Naive thymus-derived CD4-positive, alpha-beta T cell (primary cell): ENCODE measurements at regions of chr3 and their contacts with region 1.

Region 1: DNA sequence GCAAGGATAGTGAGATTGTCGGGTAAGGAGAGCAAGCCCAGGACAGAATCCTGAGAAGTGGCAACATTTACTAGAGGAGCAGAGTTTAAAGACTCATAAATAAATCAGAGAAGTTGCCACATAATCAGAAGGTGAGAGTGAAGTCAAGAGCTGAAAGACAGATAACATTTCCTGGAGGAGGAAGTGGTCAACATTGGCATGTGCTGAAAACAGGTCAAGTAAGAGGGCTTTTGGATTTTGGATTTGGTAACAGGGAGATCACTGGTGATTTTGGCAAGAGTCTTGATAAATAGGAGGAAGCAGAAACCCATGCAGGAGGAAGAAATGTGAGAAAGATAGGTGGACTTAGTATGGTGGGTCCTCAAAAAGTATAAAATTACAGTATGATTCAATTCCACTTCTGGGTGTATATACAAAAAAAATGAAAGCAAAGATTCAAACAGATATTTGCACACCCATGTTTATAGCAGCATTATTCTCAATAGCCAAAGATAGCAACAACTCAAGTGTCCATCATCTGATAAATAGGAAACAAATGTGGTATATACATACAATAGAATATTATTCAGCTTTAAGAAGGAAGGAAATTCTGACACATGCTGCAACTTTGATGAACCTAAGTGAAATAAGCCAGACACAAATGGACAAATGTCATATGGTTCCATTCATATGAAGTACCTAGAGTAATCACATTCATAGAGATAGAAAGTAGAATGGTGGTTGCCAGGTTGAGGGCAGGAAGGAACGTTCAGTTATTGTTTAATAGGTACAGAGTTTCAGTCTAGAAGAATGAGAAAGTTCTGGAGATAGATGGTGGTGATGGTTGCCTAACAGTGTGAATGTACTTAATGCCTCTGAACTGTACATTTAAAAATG is 27.3 kb upstream of the MBNL1 start:
- DNase-seq: no peak
- ATAC-seq: no peak
- H3K4me3 ChIP-seq: peak overlapping the region; percentile 24
- H3K4me3 Mint-ChIP-seq: peak overlapping the region; percentile 64 to 97 (median 92)
- H3K27ac ChIP-seq: peak overlapping the region; percentile 72
- H3K27ac Mint-ChIP-seq: peak overlapping the region; percentile 78 to 97 (median 94)
- H3K4me1 ChIP-seq: peaks cover 35 to 57% of the 10 kb centered on the region in 2 donors
- H3K4me1 Mint-ChIP-seq: peaks cover 36 to 79% (median 68%) of the 10 kb centered on the region in 7 donors
- H3K27me3 ChIP-seq: no peaks in the 10 kb centered on the region
- H3K27me3 Mint-ChIP-seq: no peaks in the 10 kb centered on the region

Region 2: GRCh38 chr3:152183473-152183872 is 57.9 kb before region 1 on chr3:
- CTCF ChIA-PET with region 1: interaction called, 7 read pairs
- POLR2A ChIA-PET with region 1: interaction called, 10 read pairs
- intact Hi-C with region 1: no loop called
- DNase-seq: peak in 7 of 9 donors; percentile 41 to 64 (median 55)
- ATAC-seq: peak; percentile 83
- H3K4me3 ChIP-seq: no peak overlapping the region
- H3K4me3 Mint-ChIP-seq: peak overlapping the region; percentile 40 to 74 (median 52)
- H3K27ac ChIP-seq: no peak overlapping the region
- H3K27ac Mint-ChIP-seq: peak overlapping the region in 8 of 9 donors; percentile 48 to 89 (median 70)
- H3K4me1 ChIP-seq: peaks cover 13 to 34% of the 10 kb centered on the region in 2 donors
- H3K4me1 Mint-ChIP-seq: peaks cover 39 to 82% (median 76%) of the 10 kb centered on the region in 7 donors
- H3K27me3 ChIP-seq: no peaks in the 10 kb centered on the region
- H3K27me3 Mint-ChIP-seq: no peaks in the 10 kb centered on the region

Region 3: DNA sequence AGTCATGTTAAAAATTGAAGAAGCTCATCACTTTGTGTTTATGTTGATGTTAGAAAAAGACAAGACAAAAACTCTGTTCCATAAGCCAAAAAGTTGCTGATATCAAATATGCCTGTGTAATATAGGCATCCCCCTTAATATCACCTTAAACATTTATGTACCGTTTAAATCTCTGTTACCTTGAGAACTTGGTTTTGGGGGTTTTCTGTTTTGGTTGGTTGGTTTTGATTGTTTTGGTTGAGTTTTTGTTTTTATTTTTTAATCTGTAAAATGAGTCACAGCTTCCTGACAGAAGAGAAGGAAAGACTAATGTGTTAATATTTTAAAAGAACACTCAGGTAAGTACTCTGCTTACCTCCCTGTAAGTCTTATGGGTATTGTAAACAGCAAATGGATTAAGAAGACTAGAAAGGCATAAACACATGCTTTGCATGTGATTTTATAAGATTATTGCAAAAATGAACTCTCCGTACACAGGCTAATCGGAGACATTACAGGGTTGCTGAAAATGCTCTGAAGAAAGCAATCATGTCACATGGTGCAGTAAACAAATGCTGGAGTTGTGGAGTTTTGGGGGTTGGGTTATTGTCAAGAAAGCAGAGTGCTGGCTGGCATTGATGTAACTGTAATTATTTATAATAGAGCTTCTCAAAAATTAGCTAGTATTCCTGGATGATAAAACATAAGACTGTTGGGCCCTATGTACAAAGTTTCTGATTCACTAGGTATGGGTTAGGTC is 42.1 kb before region 1 on chr3:
- CTCF ChIA-PET with region 1: interaction called, 4 read pairs
- POLR2A ChIA-PET with region 1: interaction called, 65 read pairs
- intact Hi-C with region 1: loop called (anchors 1 kb)
- DNase-seq: peak in 2 of 9 donors; percentile 37
- ATAC-seq: peak; percentile 58
- H3K4me3 ChIP-seq: peak overlapping the region; percentile 50
- H3K4me3 Mint-ChIP-seq: peak overlapping the region; percentile 63 to 89 (median 84)
- H3K27ac ChIP-seq: peak overlapping the region; percentile 84
- H3K27ac Mint-ChIP-seq: peak overlapping the region; percentile 90 to 100 (median 94)
- H3K4me1 ChIP-seq: peaks cover 30 to 58% of the 10 kb centered on the region in 2 donors
- H3K4me1 Mint-ChIP-seq: peaks cover 43 to 84% (median 71%) of the 10 kb centered on the region in 7 donors
- H3K27me3 ChIP-seq: no peaks in the 10 kb centered on the region
- H3K27me3 Mint-ChIP-seq: no peaks in the 10 kb centered on the region

Region 4: GRCh38 chr3:152213203-152213602 is 28.2 kb before region 1 on chr3:
- CTCF ChIA-PET with region 1: interaction called, 4 read pairs
- POLR2A ChIA-PET with region 1: interaction called, 26 read pairs
- intact Hi-C with region 1: no loop called
- DNase-seq: no peak
- ATAC-seq: no peak
- H3K4me3 ChIP-seq: peak overlapping the region; percentile 19
- H3K4me3 Mint-ChIP-seq: peak overlapping the region in 4 of 10 donors; percentile 0 to 45 (median 28)
- H3K27ac ChIP-seq: peak overlapping the region; percentile 25
- H3K27ac Mint-ChIP-seq: peak overlapping the region in 8 of 9 donors; percentile 10 to 100 (median 64)
- H3K4me1 ChIP-seq: peaks cover 10 to 38% of the 10 kb centered on the region in 2 donors
- H3K4me1 Mint-ChIP-seq: peaks cover 43 to 83% (median 70%) of the 10 kb centered on the region in 7 donors
- H3K27me3 ChIP-seq: no peaks in the 10 kb centered on the region
- H3K27me3 Mint-ChIP-seq: no peaks in the 10 kb centered on the region

Region 5: GRCh38 chr3:152229692-152230091 is 11.7 kb before region 1 on chr3:
- CTCF ChIA-PET with region 1: interaction called, 7 read pairs
- POLR2A ChIA-PET with region 1: interaction called, 57 read pairs
- intact Hi-C with region 1: loop called in 1 of 2 experiments (anchors 2 kb)
- DNase-seq: no peak
- ATAC-seq: no peak
- H3K4me3 ChIP-seq: no peak overlapping the region
- H3K4me3 Mint-ChIP-seq: peak overlapping the region in 4 of 10 donors; percentile 4 to 73 (median 34)
- H3K27ac ChIP-seq: no peak overlapping the region
- H3K27ac Mint-ChIP-seq: peak overlapping the region in 5 of 9 donors; percentile 1 to 75 (median 36)
- H3K4me1 ChIP-seq: peaks cover 4 to 32% of the 10 kb centered on the region in 2 donors
- H3K4me1 Mint-ChIP-seq: peaks cover 30 to 83% (median 71%) of the 10 kb centered on the region in 7 donors
- H3K27me3 ChIP-seq: no peaks in the 10 kb centered on the region
- H3K27me3 Mint-ChIP-seq: no peaks in the 10 kb centered on the region

Region 6: GRCh38 chr3:152281133-152281713 is 39.8 kb after region 1 on chr3:
- CTCF ChIA-PET with region 1: no interaction called
- POLR2A ChIA-PET with region 1: interaction called, 14 read pairs
- intact Hi-C with region 1: no loop called
- DNase-seq: no peak
- ATAC-seq: peak; percentile 12
- H3K4me3 ChIP-seq: peak overlapping the region; percentile 18
- H3K4me3 Mint-ChIP-seq: peak overlapping the region; percentile 64 to 79 (median 72)
- H3K27ac ChIP-seq: peak overlapping the region; percentile 49
- H3K27ac Mint-ChIP-seq: peak overlapping the region; percentile 6 to 94 (median 73)
- H3K4me1 ChIP-seq: peaks cover 47 to 86% of the 10 kb centered on the region in 2 donors
- H3K4me1 Mint-ChIP-seq: peaks cover 55 to 95% (median 85%) of the 10 kb centered on the region in 7 donors
- H3K27me3 ChIP-seq: no peaks in the 10 kb centered on the region
- H3K27me3 Mint-ChIP-seq: no peaks in the 10 kb centered on the region

Region 7: DNA sequence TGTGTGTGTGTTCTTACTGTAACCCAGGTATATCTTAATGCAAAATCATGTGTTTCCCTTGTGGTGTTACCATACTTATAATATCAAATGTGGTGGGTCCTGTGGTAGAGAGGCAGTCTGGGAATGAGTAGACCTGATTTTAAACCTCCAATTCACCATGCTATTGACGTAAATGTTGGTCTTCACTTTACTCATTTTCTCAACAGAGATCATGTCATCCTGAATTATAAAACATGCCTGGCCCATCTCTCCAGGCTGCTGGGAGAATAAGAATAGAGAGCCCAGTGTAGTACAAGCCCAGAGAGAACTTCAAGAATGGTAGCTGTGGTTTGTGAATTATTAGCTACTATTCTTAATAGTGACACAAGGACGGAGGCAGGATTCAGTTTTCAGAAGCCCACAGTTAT is 115.5 kb after region 1 on chr3:
- CTCF ChIA-PET with region 1: no interaction called
- POLR2A ChIA-PET with region 1: no interaction called
- intact Hi-C with region 1: no loop called
- DNase-seq: no peak
- ATAC-seq: peak; percentile 38
- H3K4me3 ChIP-seq: no peak overlapping the region
- H3K4me3 Mint-ChIP-seq: peak overlapping the region in 7 of 10 donors; percentile 7 to 59 (median 38)
- H3K27ac ChIP-seq: peak overlapping the region; percentile 30
- H3K27ac Mint-ChIP-seq: peak overlapping the region in 7 of 9 donors; percentile 21 to 85 (median 71)
- H3K4me1 ChIP-seq: peaks cover 25 to 50% of the 10 kb centered on the region in 2 donors
- H3K4me1 Mint-ChIP-seq: peaks cover 42 to 93% (median 81%) of the 10 kb centered on the region in 7 donors
- H3K27me3 ChIP-seq: no peaks in the 10 kb centered on the region
- H3K27me3 Mint-ChIP-seq: no peaks in the 10 kb centered on the region

Region 8: GRCh38 chr3:152695840-152696239 is 454.5 kb after region 1 on chr3:
- CTCF ChIA-PET with region 1: no interaction called
- POLR2A ChIA-PET with region 1: no interaction called
- intact Hi-C with region 1: loop called in 1 of 2 experiments (anchors 10 kb)
- DNase-seq: peak in 1 of 9 donors; percentile 3
- ATAC-seq: no peak
- H3K4me3 ChIP-seq: no peak overlapping the region
- H3K4me3 Mint-ChIP-seq: no peak overlapping the region
- H3K27ac ChIP-seq: no peak overlapping the region
- H3K27ac Mint-ChIP-seq: no peak overlapping the region
- H3K4me1 ChIP-seq: no peaks in the 10 kb centered on the region
- H3K4me1 Mint-ChIP-seq: peaks cover 0 to 14% (median 0%) of the 10 kb centered on the region in 7 donors
- H3K27me3 ChIP-seq: no peaks in the 10 kb centered on the region
- H3K27me3 Mint-ChIP-seq: peaks cover 0 to 6% (median 2%) of the 10 kb centered on the region in 5 donors